Transverse colon (tissue), 4 donors: ENCODE measurements at regions of chr14 and their contacts with region 1.

Region 1: GRCh38 chr14:96297000-96297399 is 41.0 kb downstream of the BDKRB1 start:
- DNase-seq: no peak
- H3K4me3 ChIP-seq: no peak overlapping the region
- H3K27ac ChIP-seq: no peak overlapping the region
- H3K4me1 ChIP-seq: no peaks in the 10 kb centered on the region
- H3K27me3 ChIP-seq: no peaks in the 10 kb centered on the region
- CTCF ChIP-seq: peak; percentile 50 to 68 (median 56)
- EP300 ChIP-seq: no peak
- POLR2A ChIP-seq: no peak

Region 2: DNA sequence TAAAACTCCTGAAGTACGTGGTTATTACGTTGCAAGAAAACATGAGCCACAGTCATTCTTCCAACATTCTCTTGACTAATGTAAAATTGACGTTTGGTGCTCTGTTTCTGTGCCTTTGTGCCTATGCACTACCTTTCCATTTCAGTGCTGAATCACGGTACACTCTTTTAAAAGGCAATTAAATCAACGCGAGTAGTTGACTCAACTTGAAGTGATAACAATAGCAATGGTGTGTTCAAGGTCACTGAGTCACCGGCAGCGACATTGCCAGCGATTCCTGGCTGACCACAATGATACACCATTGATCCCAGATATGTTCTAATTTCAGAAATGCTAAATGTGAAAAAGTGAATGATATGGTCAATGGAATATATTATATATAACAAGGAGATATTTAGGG is 112.7 kb after region 1 on chr14:
- in situ Hi-C with region 1: loop called in 2 of 4 experiments (anchors 10 kb)
- intact Hi-C with region 1: no loop called
- DNase-seq: no peak
- H3K4me3 ChIP-seq: no peak overlapping the region
- H3K27ac ChIP-seq: no peak overlapping the region
- H3K4me1 ChIP-seq: no peaks in the 10 kb centered on the region
- H3K27me3 ChIP-seq: no peaks in the 10 kb centered on the region
- CTCF ChIP-seq: no peak
- EP300 ChIP-seq: no peak
- POLR2A ChIP-seq: no peak

Region 3: GRCh38 chr14:96424109-96424989 is 127.3 kb after region 1 on chr14:
- in situ Hi-C with region 1: loop called in 3 of 4 experiments (anchors 5 to 10 kb)
- intact Hi-C with region 1: loop called (anchors 10 kb)
- DNase-seq: peak; percentile 48
- H3K4me3 ChIP-seq: peak overlapping the region; percentile 12 to 63 (median 38)
- H3K27ac ChIP-seq: peak overlapping the region in 2 of 4 donors; percentile 14 to 31
- H3K4me1 ChIP-seq: peaks cover 0 to 11% (median 3%) of the 10 kb centered on the region in 4 donors
- H3K27me3 ChIP-seq: no peaks in the 10 kb centered on the region
- CTCF ChIP-seq: peak; percentile 78 to 91 (median 82)
- EP300 ChIP-seq: no peak
- POLR2A ChIP-seq: no peak